Activated CD8-positive, alpha-beta T cell treated with anti-CD3 and anti-CD28 coated beads for 36 hours (primary cell): ENCODE measurements at regions of chr9 and their contacts with region 1.

Region 1: GRCh38 chr9:33623658-33624586 is 99.9 kb downstream of the ANKRD18B start:
- DNase-seq: peak; percentile 78
- ATAC-seq: peak; percentile 98
- H3K4me3 Mint-ChIP-seq: no peak overlapping the region
- H3K27ac Mint-ChIP-seq: no peak overlapping the region
- H3K4me1 Mint-ChIP-seq: peaks cover 7% of the 10 kb centered on the region
- H3K27me3 Mint-ChIP-seq: peaks cover 28% of the 10 kb centered on the region
- CTCF ChIP-seq: peak; percentile 88

Region 2: DNA sequence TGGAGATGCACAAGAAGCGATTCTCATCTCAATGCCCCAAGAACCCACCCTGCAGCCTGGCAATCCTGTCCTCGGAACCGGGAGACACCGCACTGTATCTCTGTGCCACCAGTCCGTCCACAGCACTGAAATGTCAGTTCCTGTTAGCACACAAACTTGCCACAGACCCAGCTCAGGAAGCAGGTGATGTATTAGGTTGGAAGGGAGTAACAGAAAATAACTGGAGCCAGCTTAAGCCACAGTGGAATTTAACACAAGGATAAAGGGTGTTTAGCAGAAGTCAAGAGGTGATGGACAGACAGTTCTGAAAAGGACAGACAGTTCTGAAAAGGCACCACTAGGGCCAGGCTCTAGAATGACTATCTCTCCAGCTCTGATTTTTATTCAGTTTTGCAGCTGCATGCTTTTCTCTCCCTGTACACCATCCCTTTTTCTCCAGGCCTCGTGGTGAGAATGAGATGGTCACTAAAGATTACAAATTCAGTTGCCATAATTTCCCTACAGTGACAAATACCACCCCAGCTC is 14.5 kb after region 1 on chr9:
- CTCF ChIA-PET with region 1: interaction called, 19 read pairs
- POLR2A ChIA-PET with region 1: interaction called, 3 read pairs
- intact Hi-C with region 1: no loop called
- DNase-seq: no peak
- ATAC-seq: no peak
- H3K4me3 Mint-ChIP-seq: no peak overlapping the region
- H3K27ac Mint-ChIP-seq: no peak overlapping the region
- H3K4me1 Mint-ChIP-seq: no peaks in the 10 kb centered on the region
- H3K27me3 Mint-ChIP-seq: peaks cover 49% of the 10 kb centered on the region
- CTCF ChIP-seq: no peak

Region 3: DNA sequence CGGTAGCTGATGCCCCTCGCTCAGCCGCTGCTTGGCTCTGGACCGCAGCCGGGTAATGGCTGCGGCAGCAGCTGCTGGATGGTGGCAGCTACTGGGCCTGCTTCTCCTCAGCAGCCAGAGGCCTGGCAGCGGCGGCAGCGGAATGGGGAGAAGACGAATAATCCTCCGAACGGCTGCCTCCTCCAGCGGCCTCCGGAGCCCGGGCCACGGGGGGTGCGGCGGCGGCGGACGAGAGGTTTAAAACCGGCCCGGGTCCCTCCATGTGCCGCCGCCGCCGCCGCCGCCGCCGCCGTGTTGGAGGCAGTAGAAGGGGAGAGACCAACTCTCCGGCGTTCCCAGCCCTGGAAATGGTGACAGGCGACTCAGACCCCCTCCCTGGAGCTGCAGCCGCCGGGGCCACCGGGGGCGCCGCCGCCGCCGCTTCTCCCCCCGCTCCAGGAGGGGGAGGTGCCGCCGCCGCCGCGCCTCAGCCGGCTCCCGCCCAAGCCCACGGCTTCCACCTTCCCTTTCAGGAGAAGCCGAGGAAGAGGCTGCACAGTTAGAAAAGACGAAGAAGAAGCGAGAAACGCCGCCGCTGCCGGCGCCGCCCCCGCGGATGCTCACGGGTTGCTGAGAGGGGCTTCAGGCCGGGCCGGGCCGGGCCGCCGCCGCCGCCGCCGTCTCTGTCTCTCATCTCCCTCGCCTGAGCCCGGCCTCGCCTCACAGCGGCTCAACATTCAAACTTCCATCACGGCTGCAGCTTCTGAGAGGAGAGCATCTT is 53.0 kb after region 1 on chr9:
- CTCF ChIA-PET with region 1: interaction called, 23 read pairs
- POLR2A ChIA-PET with region 1: no interaction called
- intact Hi-C with region 1: no loop called
- DNase-seq: peak; percentile 38
- ATAC-seq: peak; percentile 74
- H3K4me3 Mint-ChIP-seq: peak overlapping the region; percentile 79
- H3K27ac Mint-ChIP-seq: no peak overlapping the region
- H3K4me1 Mint-ChIP-seq: peaks cover 5% of the 10 kb centered on the region
- H3K27me3 Mint-ChIP-seq: peaks cover 53% of the 10 kb centered on the region
- CTCF ChIP-seq: no peak

Region 4: GRCh38 chr9:33721674-33722358 is 97.9 kb after region 1 on chr9:
- CTCF ChIA-PET with region 1: interaction called, 353 read pairs
- POLR2A ChIA-PET with region 1: interaction called, 5 read pairs
- intact Hi-C with region 1: loop called (anchors 1 kb)
- DNase-seq: peak; percentile 91
- ATAC-seq: peak; percentile 88
- H3K4me3 Mint-ChIP-seq: no peak overlapping the region
- H3K27ac Mint-ChIP-seq: no peak overlapping the region
- H3K4me1 Mint-ChIP-seq: no peaks in the 10 kb centered on the region
- H3K27me3 Mint-ChIP-seq: peaks cover 5% of the 10 kb centered on the region
- CTCF ChIP-seq: peak; percentile 100

Region 5: GRCh38 chr9:33778700-33779351 is 154.9 kb after region 1 on chr9:
- CTCF ChIA-PET with region 1: interaction called, 14 read pairs
- POLR2A ChIA-PET with region 1: no interaction called
- intact Hi-C with region 1: no loop called
- DNase-seq: peak; percentile 67
- ATAC-seq: peak; percentile 96
- H3K4me3 Mint-ChIP-seq: no peak overlapping the region
- H3K27ac Mint-ChIP-seq: no peak overlapping the region
- H3K4me1 Mint-ChIP-seq: peaks cover 3% of the 10 kb centered on the region
- H3K27me3 Mint-ChIP-seq: peaks cover 2% of the 10 kb centered on the region
- CTCF ChIP-seq: peak; percentile 82